HepG2 (cell line): ENCODE measurements at regions of chr4 and their contacts with region 1.

Region 1: GRCh38 chr4:144787365-144788258 is 141.7 kb downstream of the HHIP start:
- DNase-seq: peak; percentile 34
- ATAC-seq: no peak; the same call in 2 of the 3 replicates
- H3K4me3 ChIP-seq: no peak overlapping the region
- H3K27ac ChIP-seq: no peak overlapping the region
- H3K4me1 ChIP-seq: no peaks in the 10 kb centered on the region
- H3K27me3 ChIP-seq: no peaks in the 10 kb centered on the region
- CTCF ChIP-seq: peak; percentile 48
- EP300 ChIP-seq: no peak
- POLR2A ChIP-seq: no peak
- RAD21 ChIP-seq: no peak

Region 2: DNA sequence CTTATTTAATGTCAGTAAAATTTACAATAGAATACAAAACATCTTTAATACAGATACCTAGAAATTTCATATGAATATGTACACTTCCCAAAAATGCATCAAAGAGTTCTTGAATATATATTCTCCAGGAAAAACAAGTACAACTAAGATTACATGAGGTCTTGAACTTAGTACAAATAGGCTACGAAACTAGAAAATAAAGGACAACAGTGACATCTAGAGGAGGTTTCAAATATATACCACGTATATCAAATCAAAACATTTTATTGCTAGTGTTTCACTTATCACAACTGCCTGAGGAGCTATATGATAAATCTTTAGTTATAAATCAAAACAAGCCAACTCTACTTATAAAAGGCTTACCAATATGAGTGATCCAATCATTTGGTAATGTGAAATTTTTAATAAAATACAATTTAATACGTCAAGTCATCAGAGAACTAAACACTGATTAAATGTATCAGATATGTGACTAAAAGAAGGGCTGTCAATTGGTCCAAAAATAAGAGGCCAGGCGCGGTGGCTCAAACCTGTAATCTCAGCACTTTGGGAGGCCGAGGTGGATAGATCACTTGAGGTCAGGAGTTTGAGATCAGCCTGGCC is 273.8 kb after region 1 on chr4:
- CTCF ChIA-PET with region 1: no interaction called
- POLR2A ChIA-PET with region 1: no interaction called
- in situ Hi-C with region 1: no loop called
- intact Hi-C with region 1: loop called (anchors 5 kb)
- DNase-seq: peak; percentile 41
- ATAC-seq: peak; percentile 55; the same call in 1 of the 3 replicates
- H3K4me3 ChIP-seq: no peak overlapping the region
- H3K27ac ChIP-seq: no peak overlapping the region
- H3K4me1 ChIP-seq: peaks cover 8% of the 10 kb centered on the region; the same call in 1 of the 2 replicates
- H3K27me3 ChIP-seq: no peaks in the 10 kb centered on the region
- CTCF ChIP-seq: peak; percentile 54
- EP300 ChIP-seq: no peak
- POLR2A ChIP-seq: no peak
- RAD21 ChIP-seq: no peak

Region 3: GRCh38 chr4:145388043-145388442 is 600.4 kb after region 1 on chr4:
- CTCF ChIA-PET with region 1: no interaction called
- POLR2A ChIA-PET with region 1: no interaction called
- in situ Hi-C with region 1: no loop called
- intact Hi-C with region 1: no loop called
- DNase-seq: no peak
- ATAC-seq: no peak
- H3K4me3 ChIP-seq: no peak overlapping the region
- H3K27ac ChIP-seq: no peak overlapping the region
- H3K4me1 ChIP-seq: no peaks in the 10 kb centered on the region
- H3K27me3 ChIP-seq: peaks cover 0 to 8% of the 10 kb centered on the region in 2 experiments; a peak in 2 of 5 replicates
- CTCF ChIP-seq: no peak
- EP300 ChIP-seq: no peak
- POLR2A ChIP-seq: no peak
- RAD21 ChIP-seq: no peak